ENCODE measurements at regions of chr3 and their contacts with region 1.

Region 1: GRCh38 chr3:67790043-67790442 is 135.6 kb upstream of the SUCLG2 start:
- DNase-seq: peak; percentile 64
- H3K4me3 ChIP-seq: no peak overlapping the region
- H3K27ac ChIP-seq: no peak overlapping the region
- H3K4me1 ChIP-seq: no peaks in the 10 kb centered on the region
- H3K27me3 ChIP-seq: no peaks in the 10 kb centered on the region
- CTCF ChIP-seq: peak; percentile 53 to 73 (median 61)
- EP300 ChIP-seq: no peak
- POLR2A ChIP-seq: no peak

Region 2: DNA sequence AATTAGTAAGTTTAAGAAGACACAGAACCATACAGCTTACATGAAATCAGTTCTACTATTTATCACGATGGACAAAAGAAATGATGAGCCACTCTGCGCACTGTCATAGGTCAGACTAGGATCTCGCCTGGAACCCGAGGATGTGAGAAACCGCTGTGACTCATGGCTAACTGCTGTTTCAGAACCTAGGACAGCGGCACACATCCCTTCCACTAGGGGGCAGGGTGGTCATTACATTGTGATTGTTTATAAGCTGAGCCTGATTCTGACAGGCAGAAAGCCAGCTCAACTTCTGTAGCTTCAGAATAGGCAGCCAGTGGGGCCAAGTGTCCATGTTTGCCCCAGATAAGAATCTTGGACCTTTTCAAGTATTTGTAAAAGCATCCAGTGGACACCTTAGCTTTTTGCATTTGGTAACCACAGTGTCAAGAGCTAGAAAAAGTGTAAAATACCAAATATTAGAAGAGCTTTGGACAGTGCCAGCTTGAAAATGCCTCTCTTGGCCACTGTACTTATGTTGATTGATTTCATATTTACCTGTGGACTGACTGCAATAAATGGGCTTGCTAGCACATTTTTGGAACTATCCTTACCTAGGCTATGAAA is 676.1 kb before region 1 on chr3:
- in situ Hi-C with region 1: loop called in 1 of 4 experiments (anchors 25 kb)
- intact Hi-C with region 1: no loop called
- DNase-seq: peak; percentile 75
- H3K4me3 ChIP-seq: no peak overlapping the region
- H3K27ac ChIP-seq: no peak overlapping the region
- H3K4me1 ChIP-seq: no peaks in the 10 kb centered on the region
- H3K27me3 ChIP-seq: no peaks in the 10 kb centered on the region
- CTCF ChIP-seq: peak; percentile 72 to 89 (median 79)
- EP300 ChIP-seq: no peak
- POLR2A ChIP-seq: no peak

Region 3: GRCh38 chr3:67384760-67385397 is 405.2 kb before region 1 on chr3:
- in situ Hi-C with region 1: loop called in 2 of 4 experiments (anchors 10 to 25 kb)
- intact Hi-C with region 1: no loop called
- DNase-seq: no peak
- H3K4me3 ChIP-seq: no peak overlapping the region
- H3K27ac ChIP-seq: no peak overlapping the region
- H3K4me1 ChIP-seq: no peaks in the 10 kb centered on the region
- H3K27me3 ChIP-seq: no peaks in the 10 kb centered on the region
- CTCF ChIP-seq: peak in 4 of 5 experiments; percentile 11 to 41 (median 20)
- EP300 ChIP-seq: no peak
- POLR2A ChIP-seq: no peak

Region 4: DNA sequence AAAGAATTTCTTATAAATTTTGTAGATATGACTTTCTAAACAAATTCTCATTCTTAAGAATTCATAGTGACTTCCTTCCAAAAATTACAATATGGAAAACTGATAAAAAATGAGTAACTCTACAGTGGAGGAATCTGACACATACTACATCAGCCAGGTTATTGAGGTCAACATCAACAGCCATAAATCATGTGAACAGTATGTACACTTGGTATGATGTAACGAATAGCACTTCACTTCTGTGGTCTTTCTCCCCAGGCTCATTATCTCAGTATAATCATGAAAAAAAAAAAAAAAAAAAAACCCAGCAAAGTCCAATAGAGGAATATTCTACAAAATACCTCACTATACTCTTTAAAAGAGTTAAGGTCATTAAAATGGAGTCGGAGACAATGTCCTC is 24.5 kb before region 1 on chr3:
- in situ Hi-C with region 1: no loop called
- intact Hi-C with region 1: no loop called
- DNase-seq: no peak
- H3K4me3 ChIP-seq: no peak overlapping the region
- H3K27ac ChIP-seq: no peak overlapping the region
- H3K4me1 ChIP-seq: no peaks in the 10 kb centered on the region
- H3K27me3 ChIP-seq: no peaks in the 10 kb centered on the region
- CTCF ChIP-seq: no peak
- EP300 ChIP-seq: no peak
- POLR2A ChIP-seq: no peak